Caco-2 (cell line): ENCODE measurements at regions of chr10 and their contacts with region 1.

Region 1: DNA sequence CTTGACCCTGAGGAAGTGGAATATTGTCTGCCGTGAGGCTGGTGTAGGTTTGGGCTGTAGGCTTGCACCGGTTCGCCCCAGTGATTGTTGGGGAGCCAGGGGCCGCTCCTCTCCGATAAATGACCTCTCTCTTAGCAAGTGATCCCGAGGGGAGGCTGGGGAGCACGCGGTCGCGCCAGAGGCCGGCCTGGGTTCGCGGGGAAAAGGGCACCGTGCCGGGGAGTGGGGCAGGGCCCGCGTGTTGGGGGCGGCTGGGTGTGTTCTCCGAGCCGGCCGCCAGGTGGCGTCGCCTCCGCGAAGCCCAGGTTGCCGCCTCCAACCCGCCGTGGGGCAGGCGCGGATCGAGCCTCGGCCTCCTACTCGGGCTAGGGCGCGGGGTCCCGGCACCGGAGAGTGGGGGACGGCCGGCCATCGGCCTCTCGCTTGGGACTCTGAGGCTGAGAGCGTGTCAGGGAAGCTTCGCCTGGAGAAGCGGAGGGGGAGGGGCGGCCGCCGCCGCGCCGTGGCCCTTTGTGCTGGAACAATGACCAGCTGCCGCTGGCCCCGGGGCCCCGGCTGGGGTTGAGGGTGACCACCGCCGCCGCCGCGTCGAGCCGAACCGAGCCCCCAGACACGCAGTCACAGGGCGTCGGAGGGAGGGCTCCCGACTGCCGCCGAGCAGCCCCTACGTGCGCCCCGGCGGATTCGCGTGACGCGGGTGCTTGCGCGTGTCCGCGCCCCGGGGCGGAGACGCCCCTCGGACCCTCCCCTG is 442 bp upstream of the LZTS2 start:
- DNase-seq: peak; percentile 79 to 89
- H3K4me3 ChIP-seq: peak overlapping the region; percentile 94
- H3K4me3 Mint-ChIP-seq: peak overlapping the region; percentile 81
- H3K27ac Mint-ChIP-seq: peak overlapping the region; percentile 74
- H3K4me1 ChIP-seq: peaks cover 18% of the 10 kb centered on the region
- H3K4me1 Mint-ChIP-seq: peaks cover 14% of the 10 kb centered on the region
- H3K27me3 ChIP-seq: no peaks in the 10 kb centered on the region
- H3K27me3 Mint-ChIP-seq: no peaks in the 10 kb centered on the region
- CTCF ChIP-seq: peak; percentile 81 to 97

Region 2: GRCh38 chr10:100319707-100320106 is 679.5 kb before region 1 on chr10:
- CTCF ChIA-PET with region 1: no interaction called
- POLR2A ChIA-PET with region 1: no interaction called
- intact Hi-C with region 1: no loop called
- DNase-seq: no peak
- H3K4me3 ChIP-seq: no peak overlapping the region
- H3K4me3 Mint-ChIP-seq: no peak overlapping the region
- H3K27ac Mint-ChIP-seq: no peak overlapping the region
- H3K4me1 ChIP-seq: no peaks in the 10 kb centered on the region
- H3K4me1 Mint-ChIP-seq: no peaks in the 10 kb centered on the region
- H3K27me3 ChIP-seq: no peaks in the 10 kb centered on the region
- H3K27me3 Mint-ChIP-seq: peaks cover 20% of the 10 kb centered on the region
- CTCF ChIP-seq: no peak

Region 3: GRCh38 chr10:100907175-100907574 is 92.0 kb before region 1 on chr10:
- CTCF ChIA-PET with region 1: no interaction called
- POLR2A ChIA-PET with region 1: no interaction called
- intact Hi-C with region 1: no loop called
- DNase-seq: no peak
- H3K4me3 ChIP-seq: no peak overlapping the region
- H3K4me3 Mint-ChIP-seq: no peak overlapping the region
- H3K27ac Mint-ChIP-seq: no peak overlapping the region
- H3K4me1 ChIP-seq: 0 out of 2 replicates have a peak, but pooled peaks cover 4% of the 10 kb centered on the region
- H3K4me1 Mint-ChIP-seq: no peaks in the 10 kb centered on the region
- H3K27me3 ChIP-seq: no peaks in the 10 kb centered on the region
- H3K27me3 Mint-ChIP-seq: no peaks in the 10 kb centered on the region
- CTCF ChIP-seq: no peak

Region 4: DNA sequence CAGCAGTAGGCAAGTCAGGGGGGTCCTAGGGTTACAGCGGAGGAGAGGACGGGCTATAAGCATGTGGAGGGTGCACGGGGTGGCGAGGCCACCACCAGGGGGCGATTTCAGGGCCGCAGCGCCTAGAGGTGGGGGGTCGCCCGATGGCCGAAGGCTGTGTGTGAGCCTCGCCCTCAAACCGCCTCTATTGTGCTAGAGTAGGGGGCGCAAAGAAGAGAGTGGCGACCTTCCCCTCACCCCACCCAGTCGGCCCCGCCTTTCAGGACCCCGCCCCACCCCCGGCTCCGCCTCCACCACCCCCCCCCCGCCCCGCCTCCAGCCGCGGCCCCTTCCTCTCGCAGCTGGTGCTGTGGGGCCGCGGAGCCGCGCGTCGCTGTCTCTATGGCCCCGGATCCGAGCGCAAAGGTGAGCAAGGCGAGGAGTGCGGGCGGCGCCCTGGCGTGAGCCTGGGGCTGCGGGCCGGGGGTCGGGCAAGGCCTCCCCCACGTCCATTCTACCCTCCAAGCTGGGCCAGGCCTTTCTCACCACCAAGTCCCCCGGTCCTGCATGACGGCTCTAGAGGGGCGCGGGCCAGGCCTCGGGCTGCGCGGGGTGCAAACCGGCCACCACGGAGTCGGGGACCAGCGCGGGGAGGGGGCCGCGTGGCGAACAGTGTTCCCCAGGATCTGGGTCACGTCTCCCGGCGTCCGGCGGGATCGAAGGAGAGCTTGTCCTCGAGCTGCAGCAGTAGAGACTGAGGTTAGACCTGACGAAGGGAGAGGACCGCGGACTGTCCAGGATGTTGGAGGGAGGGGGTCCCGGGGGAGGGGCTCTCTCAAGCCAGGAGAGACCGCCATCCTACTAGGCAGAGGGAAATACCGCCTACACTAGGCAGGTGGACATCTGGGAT is 29.7 kb before region 1 on chr10 and contains the start of gene SEMA4G:
- CTCF ChIA-PET with region 1: interaction called, 12 read pairs
- POLR2A ChIA-PET with region 1: interaction called, 3 read pairs
- intact Hi-C with region 1: loop called (anchors 1 kb)
- DNase-seq: peak; percentile 69 to 80
- H3K4me3 ChIP-seq: peak within 1 kb of the TSS; percentile 98
- H3K4me3 Mint-ChIP-seq: peak within 1 kb of the TSS; percentile 90
- H3K27ac Mint-ChIP-seq: peak within 1 kb of the TSS; percentile 86
- H3K4me1 ChIP-seq: peaks cover 33% of the 10 kb centered on the region
- H3K4me1 Mint-ChIP-seq: peaks cover 50% of the 10 kb centered on the region
- H3K27me3 ChIP-seq: no peaks in the 10 kb centered on the region
- H3K27me3 Mint-ChIP-seq: no peaks in the 10 kb centered on the region
- CTCF ChIP-seq: peak; percentile 80 to 83
- total RNA-seq, gene SEMA4G: 67.3 and 81.2 TPM in 2 replicates

Region 5: GRCh38 chr10:101012525-101013364 is 13.6 kb after region 1 on chr10:
- CTCF ChIA-PET with region 1: interaction called, 58 read pairs
- POLR2A ChIA-PET with region 1: interaction called, 3 read pairs
- intact Hi-C with region 1: loop called (anchors 1 kb)
- DNase-seq: peak; percentile 84 to 85
- H3K4me3 ChIP-seq: no peak overlapping the region
- H3K4me3 Mint-ChIP-seq: no peak overlapping the region
- H3K27ac Mint-ChIP-seq: peak overlapping the region; percentile 2
- H3K4me1 ChIP-seq: no peaks in the 10 kb centered on the region
- H3K4me1 Mint-ChIP-seq: peaks cover 15% of the 10 kb centered on the region
- H3K27me3 ChIP-seq: no peaks in the 10 kb centered on the region
- H3K27me3 Mint-ChIP-seq: no peaks in the 10 kb centered on the region
- CTCF ChIP-seq: peak; percentile 72 to 84

Region 6: DNA sequence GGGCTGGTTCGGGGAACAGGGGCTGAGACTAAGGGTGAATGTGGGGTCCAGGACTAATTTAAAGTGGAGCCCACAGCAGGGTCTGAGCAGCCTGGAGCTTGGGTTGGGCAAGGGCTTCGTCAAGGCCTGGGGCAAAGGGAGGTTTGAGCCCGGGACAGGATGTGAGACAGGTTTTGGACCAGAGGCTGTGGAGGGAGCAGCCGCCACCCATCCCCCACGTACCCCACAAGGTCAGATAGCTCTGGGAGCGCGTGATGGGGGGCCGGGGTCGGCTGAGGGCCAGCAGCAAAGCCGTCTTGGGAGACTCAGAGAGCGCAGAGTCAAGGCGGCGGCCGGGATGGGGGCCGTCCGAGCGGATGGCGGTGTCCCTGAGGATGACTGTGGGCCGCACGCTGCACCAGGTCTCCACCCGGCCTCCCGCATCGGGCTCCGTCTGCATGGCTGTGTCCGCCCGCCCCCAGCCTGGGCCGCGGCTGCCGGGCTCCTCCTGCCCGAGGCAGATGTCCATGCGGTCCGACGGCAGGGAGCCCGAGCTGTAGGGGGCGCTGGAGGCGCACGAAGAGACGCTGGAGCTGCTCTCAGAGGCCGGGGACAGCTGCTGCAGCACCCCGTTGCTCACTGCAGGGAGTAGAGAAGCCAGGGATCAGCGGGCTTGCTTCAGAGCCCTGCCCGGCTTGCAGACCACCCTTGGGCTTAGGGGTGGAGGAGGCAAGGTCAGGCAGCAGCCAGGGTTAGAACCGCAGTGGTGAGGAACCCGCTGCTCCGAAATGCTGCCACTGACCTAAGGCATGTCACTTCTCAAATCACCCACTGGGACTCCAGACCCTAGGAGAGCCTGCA is 19.7 kb after region 1 on chr10:
- CTCF ChIA-PET with region 1: interaction called, 58 read pairs
- POLR2A ChIA-PET with region 1: interaction called, 3 read pairs
- intact Hi-C with region 1: no loop called
- DNase-seq: peak; percentile 87 to 90
- H3K4me3 ChIP-seq: no peak overlapping the region
- H3K4me3 Mint-ChIP-seq: no peak overlapping the region
- H3K27ac Mint-ChIP-seq: no peak overlapping the region
- H3K4me1 ChIP-seq: peaks cover 11% of the 10 kb centered on the region; the same call in 1 of the 2 replicates
- H3K4me1 Mint-ChIP-seq: peaks cover 12% of the 10 kb centered on the region
- H3K27me3 ChIP-seq: no peaks in the 10 kb centered on the region
- H3K27me3 Mint-ChIP-seq: no peaks in the 10 kb centered on the region
- CTCF ChIP-seq: peak; percentile 60 to 85

Region 7: DNA sequence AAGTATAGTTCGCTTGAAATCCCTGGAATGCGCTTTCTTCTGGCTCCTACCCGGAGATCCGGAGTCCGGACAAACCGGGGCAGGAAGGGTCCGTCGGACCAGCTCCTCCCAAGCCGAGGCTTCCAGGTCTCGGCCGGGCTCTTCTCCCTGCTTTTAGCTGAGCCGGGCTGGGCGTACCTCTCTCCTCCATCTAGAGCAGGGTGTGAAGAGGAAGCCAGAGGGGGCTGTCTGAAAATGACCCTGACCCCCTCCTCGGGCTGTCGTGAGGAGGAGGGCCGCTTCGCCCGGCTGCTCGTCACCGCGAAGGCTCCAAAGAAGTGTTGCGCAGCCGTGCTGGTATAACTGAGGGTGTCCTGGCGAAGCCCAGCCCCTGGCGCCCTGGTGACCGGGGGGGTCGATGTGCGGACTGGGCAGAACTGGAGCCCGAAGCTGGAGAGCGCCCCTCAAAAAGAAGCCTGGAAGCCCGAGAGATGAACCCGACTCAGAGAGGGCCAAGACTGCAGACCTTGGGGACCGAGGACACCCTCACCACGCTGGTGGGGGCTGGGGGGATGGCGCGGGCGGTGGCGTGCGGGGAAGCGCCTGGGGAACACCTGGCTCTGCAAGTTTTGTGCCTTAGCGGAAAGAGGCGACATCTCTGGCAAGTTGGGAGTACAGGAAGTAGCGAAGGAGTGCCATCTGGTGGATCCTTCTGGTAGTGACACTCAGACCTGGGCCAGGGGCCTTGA is 68.4 kb after region 1 on chr10:
- CTCF ChIA-PET with region 1: interaction called, 9 read pairs
- POLR2A ChIA-PET with region 1: no interaction called
- intact Hi-C with region 1: loop called (anchors 2 kb)
- DNase-seq: peak; percentile 90
- H3K4me3 ChIP-seq: peak overlapping the region; percentile 70
- H3K4me3 Mint-ChIP-seq: peak overlapping the region; percentile 96
- H3K27ac Mint-ChIP-seq: peak overlapping the region; percentile 98
- H3K4me1 ChIP-seq: peaks cover 30% of the 10 kb centered on the region
- H3K4me1 Mint-ChIP-seq: peaks cover 22% of the 10 kb centered on the region
- H3K27me3 ChIP-seq: no peaks in the 10 kb centered on the region
- H3K27me3 Mint-ChIP-seq: no peaks in the 10 kb centered on the region
- CTCF ChIP-seq: peak; percentile 86 to 92